HEK293 (cell line): ENCODE measurements at regions of chr18 and their contacts with region 1.

Region 1: GRCh38 chr18:44955825-44956224 is 275.1 kb downstream of the SETBP1 start:
- H3K4me3 ChIP-seq: no peak overlapping the region
- H3K27ac ChIP-seq: no peak overlapping the region
- H3K4me1 ChIP-seq: peaks cover 25% of the 10 kb centered on the region
- CTCF ChIP-seq: no peak

Region 2: DNA sequence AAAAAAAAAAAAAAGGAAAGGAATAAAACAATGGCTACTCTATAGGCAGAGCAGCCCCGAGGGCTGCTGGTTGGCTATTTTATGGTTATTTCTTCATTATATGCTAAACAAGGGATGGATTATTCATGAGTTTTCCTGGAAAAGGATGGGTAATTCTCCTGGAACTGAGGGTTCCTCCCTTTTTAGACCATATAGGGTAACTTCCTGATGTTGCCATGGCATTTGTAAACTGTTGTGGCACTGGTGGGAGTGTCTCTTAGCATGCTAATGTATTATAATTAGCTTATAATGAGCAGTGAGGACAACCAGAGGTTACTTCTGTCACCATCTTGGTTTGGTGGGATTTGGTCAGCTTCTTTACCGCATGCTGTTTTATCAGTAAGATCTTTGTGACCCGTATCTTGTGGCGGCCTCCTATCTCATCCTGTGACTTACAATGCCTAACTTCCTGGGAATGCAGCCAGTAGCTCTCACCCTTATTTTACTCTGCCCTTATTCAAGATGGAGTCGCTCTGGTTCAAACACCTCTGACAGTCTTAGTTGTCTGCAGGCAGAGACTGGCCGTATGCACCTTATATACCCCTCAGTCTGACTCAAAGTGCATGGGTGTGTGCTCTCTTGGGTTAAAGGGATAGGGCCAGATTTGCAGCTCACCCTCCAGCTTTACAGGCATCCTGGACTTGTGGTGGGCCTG is 1206.0 kb after region 1 on chr18:
- CTCF ChIA-PET with region 1: no interaction called
- POLR2A ChIA-PET with region 1: interaction called, 13 read pairs
- H3K4me3 ChIP-seq: no peak overlapping the region
- H3K27ac ChIP-seq: no peak overlapping the region
- H3K4me1 ChIP-seq: no peaks in the 10 kb centered on the region
- CTCF ChIP-seq: no peak